Caco-2 (cell line): ENCODE measurements at regions of chr3 and their contacts with region 1.

Region 1: GRCh38 chr3:14222900-14223594 is 44.4 kb downstream of the LSM3 start:
- DNase-seq: no peak
- H3K4me3 ChIP-seq: no peak overlapping the region
- H3K4me3 Mint-ChIP-seq: peak overlapping the region; percentile 15
- H3K27ac Mint-ChIP-seq: peak overlapping the region; percentile 96
- H3K4me1 ChIP-seq: peaks cover 50% of the 10 kb centered on the region
- H3K4me1 Mint-ChIP-seq: peaks cover 47% of the 10 kb centered on the region
- H3K27me3 ChIP-seq: no peaks in the 10 kb centered on the region
- H3K27me3 Mint-ChIP-seq: no peaks in the 10 kb centered on the region
- CTCF ChIP-seq: no peak

Region 2: DNA sequence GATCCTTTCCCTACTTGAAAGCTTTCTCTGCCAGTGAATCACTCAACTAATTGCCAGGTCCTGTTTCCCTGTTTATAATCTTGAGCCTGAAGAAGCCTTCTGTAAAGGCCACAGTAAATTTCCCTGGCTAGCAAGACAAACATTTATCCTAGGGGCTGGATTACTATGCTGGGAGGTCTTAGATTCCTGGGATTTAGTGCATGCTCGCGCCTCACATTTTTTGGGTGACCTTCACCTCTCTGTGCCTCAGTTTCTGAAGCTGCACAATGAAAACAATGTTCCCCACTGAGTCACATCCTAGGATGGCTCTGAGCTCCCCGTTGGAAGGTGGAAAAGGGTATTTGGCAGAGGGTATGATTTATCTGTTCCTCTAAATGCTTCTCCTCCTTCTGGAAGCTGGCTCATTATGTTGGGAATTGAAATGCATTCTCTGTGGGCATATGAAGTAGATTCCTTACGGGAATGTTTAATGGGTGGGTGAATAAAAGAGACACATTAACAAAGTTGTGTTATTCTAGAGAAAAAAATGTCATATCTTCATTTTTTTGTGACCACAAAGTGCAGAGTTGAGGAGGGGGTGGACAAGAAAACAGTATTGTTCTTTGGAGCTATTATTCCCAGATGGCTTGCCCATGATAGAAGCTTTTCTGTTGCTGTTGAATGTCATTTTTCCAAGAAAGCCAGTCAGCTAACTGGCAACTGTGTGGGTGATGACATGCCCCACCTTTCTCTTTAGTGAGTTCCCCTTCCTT is 12.0 kb before region 1 on chr3:
- CTCF ChIA-PET with region 1: no interaction called
- POLR2A ChIA-PET with region 1: interaction called, 4 read pairs
- intact Hi-C with region 1: loop called (anchors 1 kb)
- DNase-seq: no peak
- H3K4me3 ChIP-seq: no peak overlapping the region
- H3K4me3 Mint-ChIP-seq: no peak overlapping the region
- H3K27ac Mint-ChIP-seq: peak overlapping the region; percentile 8
- H3K4me1 ChIP-seq: peaks cover 74% of the 10 kb centered on the region
- H3K4me1 Mint-ChIP-seq: peaks cover 61% of the 10 kb centered on the region
- H3K27me3 ChIP-seq: no peaks in the 10 kb centered on the region
- H3K27me3 Mint-ChIP-seq: no peaks in the 10 kb centered on the region
- CTCF ChIP-seq: no peak

Region 3: GRCh38 chr3:14253022-14253706 is 30.1 kb after region 1 on chr3:
- CTCF ChIA-PET with region 1: no interaction called
- POLR2A ChIA-PET with region 1: no interaction called
- intact Hi-C with region 1: loop called (anchors 1 kb)
- DNase-seq: peak; percentile 67 to 76
- H3K4me3 ChIP-seq: no peak overlapping the region
- H3K4me3 Mint-ChIP-seq: no peak overlapping the region
- H3K27ac Mint-ChIP-seq: peak overlapping the region; percentile 29
- H3K4me1 ChIP-seq: peaks cover 28% of the 10 kb centered on the region
- H3K4me1 Mint-ChIP-seq: peaks cover 23% of the 10 kb centered on the region
- H3K27me3 ChIP-seq: no peaks in the 10 kb centered on the region
- H3K27me3 Mint-ChIP-seq: no peaks in the 10 kb centered on the region
- CTCF ChIP-seq: no peak

Region 4: GRCh38 chr3:14418296-14419250 is 195.5 kb after region 1 on chr3:
- CTCF ChIA-PET with region 1: no interaction called
- POLR2A ChIA-PET with region 1: no interaction called
- intact Hi-C with region 1: loop called (anchors 1 kb)
- DNase-seq: peak; percentile 89
- H3K4me3 ChIP-seq: no peak overlapping the region
- H3K4me3 Mint-ChIP-seq: peak overlapping the region; percentile 35
- H3K27ac Mint-ChIP-seq: peak overlapping the region; percentile 88
- H3K4me1 ChIP-seq: peaks cover 37% of the 10 kb centered on the region
- H3K4me1 Mint-ChIP-seq: peaks cover 19% of the 10 kb centered on the region
- H3K27me3 ChIP-seq: no peaks in the 10 kb centered on the region
- H3K27me3 Mint-ChIP-seq: no peaks in the 10 kb centered on the region
- CTCF ChIP-seq: no peak